ENCODE measurements at regions of chr11 and their contacts with region 1.

Region 1: DNA sequence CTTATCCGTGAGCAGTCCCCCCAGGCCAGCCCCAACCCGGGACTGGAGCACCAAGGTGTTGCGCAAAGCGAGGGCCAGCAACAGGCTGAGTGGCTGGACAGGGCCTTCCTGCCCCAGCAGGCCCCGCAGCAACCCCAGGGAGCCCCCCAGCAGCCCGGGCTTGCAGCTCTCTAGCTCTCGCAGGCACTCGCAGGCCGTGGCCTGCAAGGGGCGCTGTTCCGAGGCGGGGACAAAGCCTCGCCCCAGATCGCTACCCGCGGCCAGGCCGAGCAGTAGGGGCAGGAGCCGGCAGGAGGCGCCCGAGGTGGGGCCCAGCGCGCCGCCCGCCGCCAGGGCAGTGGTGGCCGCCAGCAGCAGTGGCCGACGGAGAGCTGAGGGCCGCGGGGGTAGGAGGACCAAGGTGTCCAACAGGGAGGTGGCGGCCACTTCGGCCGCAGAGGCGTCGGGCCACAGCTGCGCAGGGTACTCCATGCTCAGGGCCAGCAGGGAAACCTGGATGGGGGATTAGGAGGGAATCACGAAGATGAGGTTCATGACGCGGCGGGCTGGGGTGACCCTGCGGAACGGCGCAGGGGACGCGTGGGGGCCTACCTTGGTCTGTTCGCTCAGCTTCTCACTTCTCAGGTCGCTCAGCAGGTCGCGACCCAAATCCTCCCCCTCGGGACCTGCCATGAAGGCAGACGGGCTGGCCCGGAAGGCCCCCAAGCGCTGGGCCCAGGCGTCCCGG is 762 bp downstream of the AP5B1 start:
- DNase-seq: peak; percentile 92
- CTCF ChIP-seq: peak; percentile 99

Region 2: GRCh38 chr11:65726660-65727059 is 53.4 kb before region 1 on chr11:
- CTCF ChIA-PET with region 1: interaction called, 26 read pairs
- POLR2A ChIA-PET with region 1: no interaction called
- DNase-seq: no peak
- CTCF ChIP-seq: peak; percentile 5

Region 3: GRCh38 chr11:65791691-65792213 is 11.7 kb after region 1 on chr11:
- CTCF ChIA-PET with region 1: interaction called, 80 read pairs
- POLR2A ChIA-PET with region 1: no interaction called
- DNase-seq: peak; percentile 82
- CTCF ChIP-seq: no peak

Region 4: DNA sequence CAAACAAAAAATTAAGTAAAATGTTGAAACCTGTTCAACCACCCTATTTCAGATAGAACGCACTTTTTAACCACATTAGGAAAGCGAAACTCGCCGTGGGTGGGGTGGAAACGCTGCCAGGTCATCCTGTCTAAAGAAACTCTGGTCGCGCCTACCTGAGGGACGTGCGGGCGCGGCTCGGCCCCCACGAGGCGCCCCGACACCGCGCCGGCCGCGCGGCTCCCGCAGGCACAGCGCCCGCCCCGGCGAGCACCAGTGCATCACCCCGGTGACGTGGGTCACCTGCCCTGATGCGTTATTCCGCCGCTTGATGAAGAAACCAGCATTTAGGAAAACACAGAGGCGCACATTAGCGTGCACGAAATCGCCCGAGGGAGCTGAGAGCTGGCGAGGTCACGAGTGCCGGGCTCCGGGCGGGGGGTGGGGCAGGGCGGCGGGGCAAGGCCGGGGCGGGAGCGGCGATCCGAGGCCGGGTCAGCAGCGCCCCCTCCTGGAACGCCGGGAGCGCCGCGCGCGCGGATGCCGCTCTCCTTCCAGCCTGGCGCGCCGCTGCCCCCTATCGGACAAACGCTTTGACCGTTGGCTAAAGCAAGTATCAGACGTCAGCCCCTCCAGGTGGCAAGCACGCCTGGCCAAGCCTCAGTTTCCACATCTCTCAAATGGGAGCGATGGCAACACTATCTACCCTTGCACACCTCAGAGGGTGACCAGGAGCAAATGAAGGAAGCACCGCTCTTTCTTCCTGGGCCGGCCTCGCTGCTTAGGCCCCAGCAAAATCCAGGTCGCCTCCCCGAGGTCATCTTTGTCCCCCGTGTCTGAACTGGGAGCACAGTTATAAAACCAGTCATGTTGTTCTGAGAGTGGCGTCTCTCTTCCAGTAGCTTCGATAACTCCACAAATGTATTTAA is 38.1 kb after region 1 on chr11:
- CTCF ChIA-PET with region 1: interaction called, 145 read pairs
- POLR2A ChIA-PET with region 1: no interaction called
- DNase-seq: peak; percentile 95
- CTCF ChIP-seq: peak; percentile 100

Region 5: GRCh38 chr11:65844231-65845190 is 64.5 kb after region 1 on chr11:
- CTCF ChIA-PET with region 1: interaction called, 16 read pairs
- POLR2A ChIA-PET with region 1: no interaction called
- DNase-seq: no peak
- CTCF ChIP-seq: no peak

Region 6: GRCh38 chr11:65981101-65981740 is 201.2 kb after region 1 on chr11:
- CTCF ChIA-PET with region 1: interaction called, 14 read pairs
- POLR2A ChIA-PET with region 1: no interaction called
- DNase-seq: no peak
- CTCF ChIP-seq: no peak

Measured in GM10248 (cell line).